Pancreas (tissue), 10 donors: ENCODE measurements at regions of chr18 and their contacts with region 1.

Region 1: DNA sequence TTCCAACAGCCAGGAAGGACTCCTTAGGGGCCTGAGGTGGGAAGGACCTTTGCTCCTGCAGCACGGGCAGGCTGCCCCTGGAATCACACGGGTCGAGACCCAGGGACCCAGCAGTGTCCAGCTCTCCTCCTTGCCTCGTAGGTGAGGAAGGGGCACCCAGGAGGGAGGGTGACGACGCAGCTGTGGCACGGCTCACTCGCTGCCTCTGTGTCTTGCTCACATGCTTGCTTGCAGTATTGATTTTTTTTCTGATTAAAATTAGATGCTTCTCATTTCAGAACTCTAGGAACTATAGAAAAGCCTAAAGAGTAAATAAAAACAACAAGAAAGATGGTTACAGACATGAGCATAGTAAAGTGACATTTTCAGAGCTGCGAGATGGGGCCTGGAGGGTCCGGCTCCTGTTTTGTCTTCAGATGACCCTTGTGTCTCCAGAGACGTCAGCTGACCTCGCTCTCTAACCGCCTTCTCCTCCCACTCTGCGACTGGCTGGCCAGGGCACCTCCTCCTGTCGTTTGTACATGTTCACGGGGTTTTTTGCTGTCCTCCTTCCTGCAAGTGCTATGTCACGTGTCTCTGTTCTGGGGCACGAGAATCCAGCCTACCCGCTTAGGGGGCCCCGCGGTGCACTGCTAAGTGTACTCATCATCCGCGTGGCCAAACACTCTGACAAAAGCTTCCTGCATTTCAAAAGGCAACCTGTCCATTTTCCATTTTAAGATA is 65.7 kb upstream of the ZNF236 start:
- DNase-seq: no peak
- ATAC-seq: peak in 1 of 4 donors; percentile 30
- H3K4me3 ChIP-seq: no peak overlapping the region
- H3K27ac ChIP-seq: no peak overlapping the region
- H3K4me1 ChIP-seq: no peaks in the 10 kb centered on the region
- H3K27me3 ChIP-seq: no peaks in the 10 kb centered on the region
- CTCF ChIP-seq: no peak

Region 2: DNA sequence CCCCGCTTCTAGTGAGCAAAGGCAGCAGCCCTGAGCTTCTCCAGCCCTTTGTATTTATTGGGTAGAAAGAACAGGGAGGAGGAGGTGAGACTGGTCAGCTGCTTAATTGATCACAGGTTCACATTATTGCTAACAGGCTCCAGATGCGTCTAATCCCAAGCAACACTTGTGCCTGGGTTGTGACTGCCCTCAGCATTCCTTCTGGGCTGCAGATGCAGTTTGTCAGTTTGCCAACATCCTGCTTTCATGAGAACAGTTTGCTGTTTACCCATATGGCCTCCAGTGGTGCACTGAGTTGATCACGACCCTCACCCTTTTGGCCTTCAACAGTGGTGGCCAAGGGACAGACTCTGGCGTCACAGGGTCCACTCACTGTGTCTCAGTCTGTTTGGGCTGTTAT is 102.1 kb before region 1 on chr18:
- intact Hi-C with region 1: no loop called
- DNase-seq: no peak
- ATAC-seq: no peak
- H3K4me3 ChIP-seq: no peak overlapping the region
- H3K27ac ChIP-seq: no peak overlapping the region
- H3K4me1 ChIP-seq: no peaks in the 10 kb centered on the region
- H3K27me3 ChIP-seq: peaks cover 0 to 10% (median 0%) of the 10 kb centered on the region in 4 donors
- CTCF ChIP-seq: no peak

Region 3: DNA sequence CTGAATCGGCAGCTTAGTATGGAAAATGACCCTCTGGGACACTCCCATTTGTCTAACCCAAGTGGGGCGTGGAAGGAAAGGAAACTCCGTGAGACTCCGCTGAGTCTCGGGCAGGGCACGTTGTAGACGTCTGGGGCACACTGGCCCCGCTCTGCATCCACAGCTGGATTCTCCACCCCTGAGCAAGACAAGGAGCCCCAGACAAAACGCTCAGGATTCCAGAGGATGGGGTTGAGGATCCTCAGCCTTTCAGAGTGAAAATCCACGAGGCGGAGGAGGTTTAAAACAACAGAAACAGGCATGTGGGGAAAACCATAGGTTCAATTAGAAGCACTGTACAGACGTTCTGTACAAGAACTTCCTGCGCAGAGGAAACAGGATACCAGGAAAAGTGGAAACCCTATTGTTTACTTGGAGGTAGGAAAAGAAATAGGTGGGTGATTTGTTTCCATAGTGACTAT is 59.2 kb before region 1 on chr18:
- intact Hi-C with region 1: loop called in 1 of 3 experiments (anchors 10 kb)
- DNase-seq: no peak
- ATAC-seq: no peak
- H3K4me3 ChIP-seq: no peak overlapping the region
- H3K27ac ChIP-seq: no peak overlapping the region
- H3K4me1 ChIP-seq: no peaks in the 10 kb centered on the region
- H3K27me3 ChIP-seq: peaks cover 0 to 16% (median 0%) of the 10 kb centered on the region in 4 donors
- CTCF ChIP-seq: no peak

Region 4: DNA sequence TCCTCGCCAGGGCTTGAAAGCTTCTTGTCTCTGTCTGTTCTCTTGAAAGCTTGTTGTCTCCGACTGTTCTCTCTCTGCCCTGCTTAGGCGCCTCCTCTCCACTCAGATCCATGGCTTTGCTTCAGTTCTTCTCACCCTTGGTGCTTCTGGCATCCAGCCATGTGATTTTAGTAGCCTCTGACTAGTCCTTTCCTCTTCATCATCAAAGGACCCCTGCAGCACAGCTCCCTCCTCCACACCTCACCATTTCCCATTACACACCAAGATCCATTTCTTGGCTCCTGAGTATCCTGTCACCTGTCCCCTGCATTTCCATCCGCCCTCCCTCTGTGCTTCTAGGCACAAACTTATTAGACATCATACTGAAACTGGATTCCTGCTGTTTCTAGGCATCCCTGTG is 125.1 kb after region 1 on chr18:
- intact Hi-C with region 1: no loop called
- DNase-seq: no peak
- ATAC-seq: no peak
- H3K4me3 ChIP-seq: no peak overlapping the region
- H3K27ac ChIP-seq: no peak overlapping the region
- H3K4me1 ChIP-seq: no peaks in the 10 kb centered on the region
- H3K27me3 ChIP-seq: no peaks in the 10 kb centered on the region
- CTCF ChIP-seq: no peak

Region 5: GRCh38 chr18:77067291-77068061 is 310.8 kb after region 1 on chr18:
- intact Hi-C with region 1: no loop called
- DNase-seq: no peak
- ATAC-seq: peak in 3 of 4 donors; percentile 56 to 71 (median 62)
- H3K4me3 ChIP-seq: no peak overlapping the region
- H3K27ac ChIP-seq: peak overlapping the region in 3 of 4 donors; percentile 51 to 81 (median 56)
- H3K4me1 ChIP-seq: peaks cover 0 to 45% (median 17%) of the 10 kb centered on the region in 3 donors
- H3K27me3 ChIP-seq: no peaks in the 10 kb centered on the region
- CTCF ChIP-seq: no peak